MCF 10A (cell line): ENCODE measurements at regions of chr21 and their contacts with region 1.

Region 1: DNA sequence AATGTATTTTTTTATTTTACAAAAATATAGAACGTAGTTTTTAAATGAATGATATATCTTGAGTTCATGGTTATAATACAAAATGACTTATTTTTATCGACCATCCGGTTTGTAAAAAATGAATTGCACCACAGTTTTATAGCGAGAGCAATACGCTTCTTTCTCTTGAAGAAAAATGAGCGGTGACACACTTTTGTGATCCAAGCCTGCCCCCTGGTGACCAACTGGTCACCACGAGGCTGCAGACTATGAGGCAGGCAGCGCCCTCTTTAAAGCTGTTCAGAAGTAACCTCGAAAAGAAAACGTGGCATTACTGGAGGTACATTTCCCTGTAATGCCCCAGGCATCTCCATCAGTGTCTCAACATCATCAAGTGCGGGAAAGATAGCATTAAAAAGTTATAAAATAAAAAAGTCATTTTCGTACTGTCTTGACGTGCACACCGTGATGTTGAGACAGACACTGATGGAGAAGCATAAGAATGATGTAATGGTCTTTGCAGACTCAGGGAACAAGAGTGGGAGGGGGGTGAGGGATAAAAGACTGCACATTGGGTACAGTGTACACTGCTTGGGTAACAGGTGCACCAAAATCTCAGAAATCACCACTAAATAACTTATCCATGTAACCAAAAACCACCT is 734.2 kb upstream of the ADAMTS5 start:
- DNase-seq: peak; percentile 88
- H3K4me3 Mint-ChIP-seq: no peak overlapping the region
- H3K27ac Mint-ChIP-seq: no peak overlapping the region
- H3K4me1 Mint-ChIP-seq: no peaks in the 10 kb centered on the region
- H3K27me3 Mint-ChIP-seq: no peaks in the 10 kb centered on the region
- CTCF ChIP-seq: peak; percentile 89

Region 2: GRCh38 chr21:26769613-26770188 is 931.4 kb before region 1 on chr21:
- CTCF ChIA-PET with region 1: interaction called, 3 read pairs
- POLR2A ChIA-PET with region 1: no interaction called
- intact Hi-C with region 1: loop called (anchors 5 kb)
- DNase-seq: peak; percentile 48
- H3K4me3 Mint-ChIP-seq: no peak overlapping the region
- H3K27ac Mint-ChIP-seq: no peak overlapping the region
- H3K4me1 Mint-ChIP-seq: no peaks in the 10 kb centered on the region
- H3K27me3 Mint-ChIP-seq: no peaks in the 10 kb centered on the region
- CTCF ChIP-seq: peak; percentile 46

Region 3: DNA sequence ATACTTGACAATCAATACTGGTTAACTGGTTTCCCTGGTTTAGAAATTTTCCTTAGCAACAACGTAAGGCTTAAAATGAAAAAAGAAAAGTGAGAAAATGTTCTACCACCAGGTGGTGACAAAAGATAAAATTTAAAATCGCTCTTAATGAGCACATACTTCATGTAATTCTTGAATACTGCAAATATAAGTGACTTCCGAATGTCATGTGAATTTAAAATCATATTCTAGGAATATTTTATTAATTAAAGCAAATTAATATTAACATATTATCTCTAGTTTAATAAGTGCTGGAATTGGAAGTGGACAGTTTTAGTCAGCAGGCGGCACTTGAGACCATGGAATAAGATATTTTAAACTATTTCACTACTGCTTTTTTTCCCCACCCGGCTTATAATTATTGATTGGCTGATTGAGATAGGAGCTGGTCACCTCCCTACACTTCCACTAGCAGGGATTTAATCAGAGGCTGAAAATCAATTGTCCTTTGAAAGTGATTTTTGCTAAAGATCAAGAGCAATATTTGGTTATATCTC is 850.9 kb before region 1 on chr21:
- CTCF ChIA-PET with region 1: interaction called, 48 read pairs
- POLR2A ChIA-PET with region 1: interaction called, 3 read pairs
- intact Hi-C with region 1: loop called (anchors 1 kb)
- DNase-seq: peak; percentile 52
- H3K4me3 Mint-ChIP-seq: no peak overlapping the region
- H3K27ac Mint-ChIP-seq: no peak overlapping the region
- H3K4me1 Mint-ChIP-seq: peaks cover 18% of the 10 kb centered on the region
- H3K27me3 Mint-ChIP-seq: peaks cover 29% of the 10 kb centered on the region
- CTCF ChIP-seq: peak; percentile 70

Region 4: GRCh38 chr21:27362249-27362648 is 338.8 kb before region 1 on chr21:
- CTCF ChIA-PET with region 1: interaction called, 3 read pairs
- POLR2A ChIA-PET with region 1: no interaction called
- intact Hi-C with region 1: loop called (anchors 10 kb)
- DNase-seq: peak; percentile 3
- H3K4me3 Mint-ChIP-seq: no peak overlapping the region
- H3K27ac Mint-ChIP-seq: no peak overlapping the region
- H3K4me1 Mint-ChIP-seq: no peaks in the 10 kb centered on the region
- H3K27me3 Mint-ChIP-seq: no peaks in the 10 kb centered on the region
- CTCF ChIP-seq: no peak

Region 5: GRCh38 chr21:27564684-27565301 is 136.3 kb before region 1 on chr21:
- CTCF ChIA-PET with region 1: interaction called, 23 read pairs
- POLR2A ChIA-PET with region 1: interaction called, 5 read pairs
- intact Hi-C with region 1: loop called (anchors 2 kb)
- DNase-seq: peak; percentile 51
- H3K4me3 Mint-ChIP-seq: no peak overlapping the region
- H3K27ac Mint-ChIP-seq: no peak overlapping the region
- H3K4me1 Mint-ChIP-seq: peaks cover 12% of the 10 kb centered on the region
- H3K27me3 Mint-ChIP-seq: no peaks in the 10 kb centered on the region
- CTCF ChIP-seq: peak; percentile 71

Region 6: DNA sequence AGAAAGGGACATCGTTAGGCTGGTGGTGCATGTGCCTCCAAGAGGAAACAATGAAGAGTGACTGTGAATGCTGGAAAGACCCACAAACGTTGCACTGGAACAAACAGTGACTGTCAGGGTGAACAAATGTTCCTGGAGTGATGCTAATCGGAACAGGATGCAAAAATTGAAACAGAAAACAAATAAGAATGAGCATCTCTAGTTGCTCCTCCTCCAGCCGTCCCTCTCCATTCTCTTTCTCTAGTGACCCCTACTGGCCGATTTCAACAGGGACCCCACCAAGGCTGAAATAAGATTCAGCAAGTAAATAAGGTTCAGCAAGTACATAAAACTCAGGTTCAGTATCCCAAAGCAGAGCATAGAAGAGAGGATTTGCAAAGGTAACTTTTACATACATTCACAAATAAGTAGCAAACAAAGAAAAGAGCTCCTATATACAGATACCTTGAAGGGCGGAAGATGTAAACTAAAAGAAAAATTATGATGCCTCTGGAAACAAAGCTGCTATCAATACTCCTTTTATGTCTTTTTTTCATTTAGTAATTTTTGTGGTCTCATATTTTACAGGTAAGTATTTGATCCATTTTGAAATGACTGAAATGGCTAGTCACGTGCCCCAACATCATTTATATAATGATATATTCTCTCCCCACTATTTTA is 101.9 kb after region 1 on chr21:
- CTCF ChIA-PET with region 1: interaction called, 7 read pairs
- POLR2A ChIA-PET with region 1: no interaction called
- intact Hi-C with region 1: loop called (anchors 5 kb)
- DNase-seq: peak; percentile 53
- H3K4me3 Mint-ChIP-seq: no peak overlapping the region
- H3K27ac Mint-ChIP-seq: no peak overlapping the region
- H3K4me1 Mint-ChIP-seq: no peaks in the 10 kb centered on the region
- H3K27me3 Mint-ChIP-seq: no peaks in the 10 kb centered on the region
- CTCF ChIP-seq: peak; percentile 55